Motor neuron (in vitro differentiated cells): ENCODE measurements at regions of chr16 and their contacts with region 1.

Region 1: DNA sequence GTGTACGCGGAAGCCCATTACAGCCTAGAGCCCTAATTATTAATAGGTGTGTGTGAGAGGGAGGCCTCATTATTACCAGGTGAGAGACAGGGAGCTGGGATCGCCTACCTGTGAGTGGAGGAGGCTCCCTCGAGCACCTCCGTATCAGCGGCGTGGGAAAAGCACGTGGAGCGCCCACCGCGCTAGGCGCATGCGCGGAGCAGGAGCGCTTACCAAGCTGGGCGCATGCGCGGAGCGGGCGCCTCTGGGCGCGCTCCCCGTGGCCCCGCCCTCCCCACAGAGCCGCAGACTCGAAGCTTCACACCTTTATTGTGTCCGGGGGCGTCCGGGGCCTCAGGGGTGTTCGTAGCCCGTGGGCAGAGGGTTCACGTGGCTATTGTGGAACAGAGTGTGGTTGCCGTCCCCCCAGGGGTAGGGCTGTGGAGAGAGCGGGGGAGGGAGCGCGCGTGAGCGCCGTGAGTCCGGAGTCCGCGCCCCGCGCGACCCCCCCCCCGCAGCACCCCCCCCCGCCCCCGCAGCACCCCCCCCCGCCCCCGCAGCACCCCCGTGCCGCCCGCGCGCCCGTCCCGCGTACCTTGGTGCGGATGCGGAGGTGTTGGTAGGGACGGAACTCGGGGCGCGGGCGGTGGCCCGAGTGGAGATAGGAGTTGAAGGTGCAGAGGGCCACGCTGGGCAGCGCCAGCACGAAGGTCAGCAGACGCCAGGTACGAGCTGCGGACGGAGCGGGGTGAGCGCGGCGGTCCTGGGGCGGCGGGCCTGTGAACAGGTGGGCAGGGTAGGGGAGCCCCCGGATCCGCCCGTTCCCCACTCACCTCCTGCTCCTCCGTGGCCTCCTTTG is 500 bp downstream of the COX6A2 start:
- ATAC-seq: peak in 4 of 8 experiments; percentile 38 to 93 (median 71)
- H3K4me3 ChIP-seq: peak overlapping the region in 4 of 5 donors; percentile 11 to 57 (median 30)
- H3K27ac ChIP-seq: no peak overlapping the region
- H3K4me1 ChIP-seq: peaks cover 0 to 2% of the 10 kb centered on the region in 2 donors

Region 2: GRCh38 chr16:30984669-30985400 is 442.8 kb before region 1 on chr16 and contains the start of gene HSD3B7:
- in situ Hi-C with region 1: loop called in 2 of 9 experiments (anchors 25 kb)
- ATAC-seq: peak; percentile 36 to 90 (median 87)
- H3K4me3 ChIP-seq: peak within 1 kb of the TSS in 2 of 5 donors; percentile 7 to 11
- H3K27ac ChIP-seq: peak within 1 kb of the TSS in 1 of 2 donors; percentile 22
- H3K4me1 ChIP-seq: peaks cover 3 to 11% of the 10 kb centered on the region in 2 donors
- total RNA-seq, gene HSD3B7: 0.67 to 68.7 (median 1.6) TPM

Region 3: DNA sequence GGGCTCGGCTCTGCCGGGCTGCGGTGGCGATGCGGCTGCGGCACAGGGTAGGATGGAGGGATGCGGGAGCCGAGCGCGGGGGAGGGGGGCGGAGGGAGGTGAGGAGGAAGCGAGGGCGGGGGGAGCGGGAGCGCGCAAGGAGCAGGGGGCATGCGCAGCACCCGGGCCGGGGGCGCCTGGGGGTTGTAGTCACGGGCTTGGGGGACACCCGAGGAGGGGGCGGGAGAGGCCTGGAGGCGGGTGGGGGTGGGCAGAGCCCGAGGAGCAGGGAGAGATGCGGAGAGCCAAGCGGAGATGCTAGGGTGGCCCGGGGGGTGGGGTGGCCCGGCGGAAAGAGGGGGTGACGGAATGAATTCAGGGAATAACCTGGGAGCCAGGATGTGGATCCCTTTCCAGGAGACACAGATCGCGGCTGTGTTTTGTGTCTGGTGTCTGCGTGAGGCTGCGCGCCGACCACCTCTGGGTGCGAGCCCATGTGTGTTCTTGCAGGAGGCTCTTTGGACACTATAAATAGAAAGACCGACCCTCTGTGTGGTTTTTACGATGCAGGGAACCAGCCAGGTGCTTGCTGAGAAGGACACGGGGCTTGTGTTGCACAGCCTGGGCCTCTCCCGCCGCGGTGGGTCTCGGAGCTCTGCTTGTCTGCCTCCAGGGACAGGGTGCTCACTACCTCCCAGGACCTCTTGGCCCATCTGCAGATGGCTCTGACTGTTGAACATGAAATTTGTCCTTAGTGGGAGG is 416.9 kb before region 1 on chr16 and contains the start of gene STX1B:
- in situ Hi-C with region 1: loop called in 1 of 9 experiments (anchors 25 kb)
- ATAC-seq: peak in 6 of 8 experiments; percentile 55 to 89 (median 83)
- H3K4me3 ChIP-seq: peak within 1 kb of the TSS; percentile 68 to 98 (median 91)
- H3K27ac ChIP-seq: peak within 1 kb of the TSS; percentile 44 to 68
- H3K4me1 ChIP-seq: peaks cover 3 to 11% of the 10 kb centered on the region in 2 donors
- total RNA-seq, gene STX1B: 0.45 to 20.9 (median 10.0) TPM

Region 4: GRCh38 chr16:31202414-31203375 is 225.0 kb before region 1 on chr16 and contains the start of gene PYCARD:
- in situ Hi-C with region 1: loop called in 2 of 9 experiments (anchors 25 kb)
- ATAC-seq: peak in 7 of 8 experiments; percentile 9 to 52 (median 36)
- H3K4me3 ChIP-seq: no peak within 1 kb of the TSS
- H3K27ac ChIP-seq: no peak within 1 kb of the TSS
- H3K4me1 ChIP-seq: no peaks in the 10 kb centered on the region
- total RNA-seq, gene PYCARD: 0.43 to 45.6 (median 1.2) TPM